ENCODE measurements at regions of chr6 and their contacts with region 1.

Region 1: DNA sequence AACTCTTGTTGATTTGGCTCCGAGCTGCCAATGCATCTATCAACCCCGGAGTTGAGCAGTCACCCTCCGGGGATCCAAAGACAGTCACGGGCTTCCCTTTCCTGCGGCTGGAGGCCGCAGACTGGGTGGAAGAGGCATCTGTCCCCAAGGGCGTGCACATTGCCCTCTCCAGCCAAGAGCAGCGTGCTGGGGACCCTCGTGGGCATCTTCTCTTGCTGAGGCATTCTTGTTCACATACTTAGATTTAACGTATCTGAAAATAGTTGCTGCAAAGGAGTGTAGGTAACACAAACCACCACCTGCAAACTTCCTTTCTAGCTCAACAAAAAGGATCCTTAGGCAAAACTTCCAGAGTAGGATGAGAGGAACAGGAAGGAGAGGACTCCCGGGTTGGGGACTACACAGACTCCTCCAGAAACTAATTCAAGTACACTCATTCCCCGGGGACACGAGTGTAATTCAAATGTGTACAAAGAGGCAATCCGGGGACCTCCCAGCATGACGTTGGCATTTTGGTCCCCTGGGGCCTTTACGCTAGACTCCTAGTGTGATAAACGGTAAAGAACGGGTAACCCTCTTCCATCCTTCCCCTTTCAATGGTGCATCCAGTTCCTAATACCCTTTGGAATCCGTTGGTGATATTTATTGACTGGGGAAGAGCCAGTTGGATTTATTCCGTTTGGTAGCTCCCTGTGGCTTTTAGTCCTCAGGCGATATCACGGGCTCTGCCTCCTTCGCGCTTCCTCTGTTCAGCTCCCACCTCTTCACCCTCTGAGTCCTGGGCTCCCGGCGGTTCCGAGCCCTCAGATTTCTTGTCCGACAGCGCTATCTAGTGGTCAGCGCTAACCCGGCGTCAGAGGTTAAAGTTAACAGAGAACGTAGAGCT is 2.7 kb upstream of the COL12A1 start:
- DNase-seq: peak; percentile 23
- ATAC-seq: peak; percentile 86
- H3K4me3 ChIP-seq: no peak overlapping the region
- H3K27ac ChIP-seq: no peak overlapping the region
- H3K4me1 ChIP-seq: no peaks in the 10 kb centered on the region
- H3K27me3 ChIP-seq: peaks cover 29% of the 10 kb centered on the region in 2 experiments
- CTCF ChIP-seq: peak; percentile 82 to 96 (median 92)
- EP300 ChIP-seq: no peak
- POLR2A ChIP-seq: no peak
- RAD21 ChIP-seq: peak; percentile 96

Region 2: DNA sequence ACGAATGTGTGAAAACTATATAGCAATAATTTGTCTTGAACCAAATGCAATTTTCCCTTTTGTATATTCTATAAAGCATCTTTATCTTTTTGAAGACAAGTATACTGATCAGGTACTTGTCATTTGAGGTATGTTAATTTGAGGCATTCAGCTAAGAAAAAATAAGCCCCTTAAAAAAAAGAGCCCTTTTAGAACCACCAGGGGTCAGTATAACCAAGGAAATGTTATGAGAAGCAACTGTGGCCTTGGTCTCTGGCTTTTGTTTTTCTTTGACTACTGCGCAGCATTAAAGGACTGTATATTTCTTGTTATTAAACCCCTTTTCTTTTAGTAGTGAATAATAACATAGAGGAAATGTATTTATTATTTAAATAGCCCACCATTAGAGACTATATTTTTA is 1469.4 kb before region 1 on chr6:
- CTCF ChIA-PET with region 1: interaction called, 74 read pairs
- POLR2A ChIA-PET with region 1: no interaction called
- RAD21 ChIA-PET with region 1: interaction called, 46 read pairs
- SMC1A ChIA-PET with region 1: interaction called, 50 read pairs
- in situ Hi-C with region 1: no loop called
- intact Hi-C with region 1: loop called (anchors 2 kb)
- DNase-seq: no peak
- ATAC-seq: peak; percentile 88
- H3K4me3 ChIP-seq: no peak overlapping the region
- H3K27ac ChIP-seq: no peak overlapping the region
- H3K4me1 ChIP-seq: no peaks in the 10 kb centered on the region; the same call in 1 of the 2 replicates
- H3K27me3 ChIP-seq: no peaks in the 10 kb centered on the region
- CTCF ChIP-seq: peak; percentile 57 to 81 (median 66)
- EP300 ChIP-seq: no peak
- POLR2A ChIP-seq: no peak
- RAD21 ChIP-seq: peak; percentile 94

Region 3: GRCh38 chr6:73985891-73986290 is 1222.7 kb before region 1 on chr6:
- CTCF ChIA-PET with region 1: interaction called, 15 read pairs
- POLR2A ChIA-PET with region 1: no interaction called
- RAD21 ChIA-PET with region 1: interaction called, 4 read pairs
- SMC1A ChIA-PET with region 1: interaction called, 4 read pairs
- in situ Hi-C with region 1: loop called (anchors 10 kb)
- intact Hi-C with region 1: no loop called
- DNase-seq: no peak
- ATAC-seq: peak; percentile 42; the same call in 1 of the 3 replicates
- H3K4me3 ChIP-seq: no peak overlapping the region
- H3K27ac ChIP-seq: no peak overlapping the region
- H3K4me1 ChIP-seq: no peaks in the 10 kb centered on the region
- H3K27me3 ChIP-seq: no peaks in the 10 kb centered on the region
- CTCF ChIP-seq: peak; percentile 6 to 16 (median 8); a peak in 2 of 6 replicates
- EP300 ChIP-seq: no peak
- POLR2A ChIP-seq: no peak
- RAD21 ChIP-seq: no peak

Region 4: DNA sequence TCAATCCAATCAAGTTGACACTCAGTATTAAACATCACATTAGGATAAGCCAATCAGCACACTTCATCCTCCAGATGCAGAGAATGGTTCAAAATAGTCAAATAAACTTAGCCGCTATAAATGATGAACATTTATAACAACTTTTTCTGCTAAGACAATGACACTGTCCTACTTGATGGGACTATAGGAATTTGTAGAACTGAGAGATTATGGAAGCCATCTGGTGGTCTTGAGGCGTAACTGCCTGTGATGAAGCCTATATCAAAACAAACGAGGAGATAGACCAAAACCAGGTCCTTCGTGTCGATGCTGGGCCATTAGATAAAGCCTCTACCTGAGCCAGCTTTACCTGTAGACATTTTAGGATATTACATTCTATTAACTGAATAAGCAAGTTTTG is 633.7 kb before region 1 on chr6:
- CTCF ChIA-PET with region 1: interaction called, 5 read pairs
- POLR2A ChIA-PET with region 1: no interaction called
- RAD21 ChIA-PET with region 1: interaction called, 3 read pairs
- SMC1A ChIA-PET with region 1: interaction called, 4 read pairs
- in situ Hi-C with region 1: no loop called
- intact Hi-C with region 1: loop called (anchors 5 kb)
- DNase-seq: no peak
- ATAC-seq: peak; percentile 50
- H3K4me3 ChIP-seq: no peak overlapping the region
- H3K27ac ChIP-seq: no peak overlapping the region
- H3K4me1 ChIP-seq: peaks cover 12% of the 10 kb centered on the region
- H3K27me3 ChIP-seq: no peaks in the 10 kb centered on the region
- CTCF ChIP-seq: peak; percentile 41 to 52 (median 47); a peak in 5 of 6 replicates
- EP300 ChIP-seq: no peak
- POLR2A ChIP-seq: no peak
- RAD21 ChIP-seq: peak; percentile 57; the same call in 1 of the 2 replicates

Region 5: DNA sequence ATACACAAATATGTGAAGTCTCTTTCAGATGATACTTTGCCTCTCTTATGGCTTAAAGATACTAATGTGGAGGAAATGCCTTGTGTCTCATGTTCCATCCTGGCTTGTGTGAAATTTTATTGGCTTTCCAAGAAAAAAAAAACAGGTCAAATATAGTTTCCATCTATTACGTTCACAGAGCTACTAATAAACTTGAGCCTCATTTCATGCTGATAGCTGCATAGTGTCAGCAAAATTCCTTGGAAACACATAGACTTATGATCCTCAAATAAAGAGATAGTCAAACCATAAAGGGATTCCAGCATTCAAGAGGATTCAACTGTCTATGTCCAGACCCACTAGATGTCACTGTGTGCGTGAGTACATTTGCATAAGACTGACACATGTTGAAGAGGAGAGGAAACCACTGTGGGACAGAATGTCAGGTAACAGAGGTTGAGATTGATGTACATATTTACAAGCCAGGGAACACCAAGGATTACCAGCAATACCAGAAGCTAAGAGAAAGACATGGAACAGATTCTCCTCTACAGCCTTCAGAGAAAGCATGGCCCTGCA is 269.3 kb before region 1 on chr6:
- CTCF ChIA-PET with region 1: interaction called, 4 read pairs
- POLR2A ChIA-PET with region 1: no interaction called
- RAD21 ChIA-PET with region 1: no interaction called
- SMC1A ChIA-PET with region 1: no interaction called
- in situ Hi-C with region 1: no loop called
- intact Hi-C with region 1: loop called (anchors 10 kb)
- DNase-seq: no peak
- ATAC-seq: 0 out of 3 replicates have a peak, but pooled peaks have one; percentile 29
- H3K4me3 ChIP-seq: no peak overlapping the region
- H3K27ac ChIP-seq: no peak overlapping the region
- H3K4me1 ChIP-seq: no peaks in the 10 kb centered on the region
- H3K27me3 ChIP-seq: no peaks in the 10 kb centered on the region
- CTCF ChIP-seq: no peak
- EP300 ChIP-seq: no peak
- POLR2A ChIP-seq: no peak
- RAD21 ChIP-seq: no peak

Region 6: GRCh38 chr6:75386053-75386770 is 177.7 kb after region 1 on chr6:
- CTCF ChIA-PET with region 1: no interaction called
- POLR2A ChIA-PET with region 1: no interaction called
- RAD21 ChIA-PET with region 1: no interaction called
- SMC1A ChIA-PET with region 1: no interaction called
- in situ Hi-C with region 1: no loop called
- intact Hi-C with region 1: no loop called
- DNase-seq: no peak
- ATAC-seq: peak; percentile 71
- H3K4me3 ChIP-seq: no peak overlapping the region
- H3K27ac ChIP-seq: no peak overlapping the region
- H3K4me1 ChIP-seq: no peaks in the 10 kb centered on the region
- H3K27me3 ChIP-seq: no peaks in the 10 kb centered on the region
- CTCF ChIP-seq: no peak
- EP300 ChIP-seq: no peak
- POLR2A ChIP-seq: no peak
- RAD21 ChIP-seq: no peak

Region 7: DNA sequence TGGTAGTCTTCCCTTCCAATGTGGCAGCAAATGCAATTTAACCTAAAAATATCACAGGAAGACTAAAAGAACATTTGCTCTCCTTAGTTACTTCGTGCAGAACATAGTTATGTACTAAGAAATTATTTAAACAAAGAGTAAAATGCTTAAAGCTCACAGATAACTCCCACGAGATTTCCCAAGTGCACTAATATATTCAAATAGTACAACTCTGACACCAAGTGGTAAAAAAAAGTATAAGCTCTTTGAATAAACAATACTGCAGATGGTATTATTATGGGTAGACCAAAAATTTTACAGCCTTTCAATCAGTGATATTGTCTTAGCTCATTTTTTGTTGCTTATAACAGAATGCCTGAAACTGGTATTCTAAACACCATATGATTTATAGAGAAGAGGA is 337.8 kb after region 1 on chr6:
- CTCF ChIA-PET with region 1: interaction called, 10 read pairs
- POLR2A ChIA-PET with region 1: no interaction called
- RAD21 ChIA-PET with region 1: interaction called, 5 read pairs
- SMC1A ChIA-PET with region 1: interaction called, 4 read pairs
- in situ Hi-C with region 1: no loop called
- intact Hi-C with region 1: no loop called
- DNase-seq: no peak
- ATAC-seq: peak; percentile 57
- H3K4me3 ChIP-seq: no peak overlapping the region
- H3K27ac ChIP-seq: no peak overlapping the region
- H3K4me1 ChIP-seq: peaks cover 2% of the 10 kb centered on the region; the same call in 1 of the 2 replicates
- H3K27me3 ChIP-seq: no peaks in the 10 kb centered on the region
- CTCF ChIP-seq: no peak; a peak in 1 of 6 replicates
- EP300 ChIP-seq: no peak
- POLR2A ChIP-seq: no peak
- RAD21 ChIP-seq: no peak